ENCODE measurements at regions of chrX and their contacts with region 1.

Region 1: GRCh38 chrX:12946838-12947544 is 27.9 kb upstream of the TMSB4X start:
- H3K4me3 ChIP-seq: no peak overlapping the region
- H3K27ac ChIP-seq: peak overlapping the region; percentile 90
- H3K4me1 ChIP-seq: peaks cover 17% of the 10 kb centered on the region
- CTCF ChIP-seq: peak; percentile 55; the same call in 1 of the 2 replicates

Region 2: GRCh38 chrX:12452268-12452667 is 494.7 kb before region 1 on chrX:
- CTCF ChIA-PET with region 1: no interaction called
- POLR2A ChIA-PET with region 1: no interaction called
- H3K4me3 ChIP-seq: no peak overlapping the region
- H3K27ac ChIP-seq: no peak overlapping the region
- H3K4me1 ChIP-seq: no peaks in the 10 kb centered on the region
- CTCF ChIP-seq: no peak

Region 3: GRCh38 chrX:12868747-12869146 is 78.2 kb before region 1 on chrX:
- CTCF ChIA-PET with region 1: no interaction called
- POLR2A ChIA-PET with region 1: no interaction called
- H3K4me3 ChIP-seq: no peak overlapping the region
- H3K27ac ChIP-seq: no peak overlapping the region
- H3K4me1 ChIP-seq: no peaks in the 10 kb centered on the region
- CTCF ChIP-seq: no peak

Region 4: DNA sequence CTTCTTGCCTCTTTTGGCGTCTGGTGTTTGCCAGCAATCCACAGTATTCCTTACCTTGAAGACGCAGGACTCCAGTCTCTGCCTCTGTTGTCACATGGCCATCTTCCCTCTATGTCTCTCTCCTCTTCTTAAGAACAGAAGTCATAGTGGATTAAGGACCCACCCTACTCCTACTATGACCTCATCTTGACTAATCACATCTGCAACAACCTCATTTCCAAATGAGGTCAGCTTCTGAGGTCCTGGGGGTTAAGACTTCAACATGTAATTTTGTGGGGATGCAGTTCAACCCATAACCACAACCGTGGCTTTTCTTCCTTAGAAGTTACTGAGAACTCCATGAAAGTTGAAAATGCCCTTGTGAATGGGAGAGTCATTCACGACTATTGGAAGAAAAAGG is 17.3 kb before region 1 on chrX:
- CTCF ChIA-PET with region 1: interaction called, 15 read pairs
- POLR2A ChIA-PET with region 1: no interaction called
- H3K4me3 ChIP-seq: no peak overlapping the region
- H3K27ac ChIP-seq: no peak overlapping the region
- H3K4me1 ChIP-seq: no peaks in the 10 kb centered on the region
- CTCF ChIP-seq: no peak

Region 5: GRCh38 chrX:12974796-12975669 is 28.0 kb after region 1 on chrX and contains the start of gene TMSB4X:
- CTCF ChIA-PET with region 1: interaction called, 14 read pairs
- POLR2A ChIA-PET with region 1: interaction called, 8 read pairs
- H3K4me3 ChIP-seq: peak within 1 kb of the TSS; percentile 62
- H3K27ac ChIP-seq: peak within 1 kb of the TSS; percentile 73
- H3K4me1 ChIP-seq: no peaks in the 10 kb centered on the region
- CTCF ChIP-seq: no peak

Region 6: GRCh38 chrX:13007519-13008188 is 60.7 kb after region 1 on chrX:
- CTCF ChIA-PET with region 1: interaction called, 14 read pairs
- POLR2A ChIA-PET with region 1: no interaction called
- H3K4me3 ChIP-seq: no peak overlapping the region
- H3K27ac ChIP-seq: no peak overlapping the region
- H3K4me1 ChIP-seq: no peaks in the 10 kb centered on the region
- CTCF ChIP-seq: no peak

Region 7: GRCh38 chrX:13043144-13043543 is 96.2 kb after region 1 on chrX:
- CTCF ChIA-PET with region 1: interaction called, 16 read pairs
- POLR2A ChIA-PET with region 1: no interaction called
- H3K4me3 ChIP-seq: no peak overlapping the region
- H3K27ac ChIP-seq: no peak overlapping the region
- H3K4me1 ChIP-seq: no peaks in the 10 kb centered on the region
- CTCF ChIP-seq: no peak

Region 8: DNA sequence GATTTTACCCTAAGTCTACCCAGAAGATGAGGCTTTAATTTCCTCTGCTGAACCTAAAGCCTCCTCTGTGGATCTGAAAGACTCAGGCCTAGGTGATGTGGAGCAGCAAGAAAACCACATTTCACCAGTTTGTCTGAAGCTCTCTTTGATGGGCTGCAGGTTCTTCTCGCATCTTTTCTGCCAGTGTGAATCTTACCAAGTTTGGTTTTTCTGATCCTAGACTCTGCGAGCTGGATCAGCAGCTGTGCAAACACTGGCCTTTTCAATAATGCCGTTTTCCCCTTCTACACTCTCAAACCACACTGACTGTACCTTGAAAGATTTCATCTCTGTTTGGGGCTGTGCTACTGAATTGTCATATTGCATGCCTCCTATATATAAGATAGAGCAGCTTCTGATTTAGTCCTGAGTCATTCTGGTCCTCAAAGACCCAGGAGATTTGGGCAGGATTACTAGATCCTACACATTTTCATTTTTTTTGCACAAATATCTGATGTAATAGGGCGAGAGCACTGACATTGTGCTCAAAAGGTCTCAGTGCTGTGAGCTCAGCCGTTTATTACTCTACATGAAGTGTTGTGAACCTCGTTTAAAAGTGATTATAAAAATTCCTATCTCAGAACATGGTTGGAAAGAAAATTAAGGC is 231.1 kb after region 1 on chrX:
- CTCF ChIA-PET with region 1: interaction called, 10 read pairs
- POLR2A ChIA-PET with region 1: no interaction called
- H3K4me3 ChIP-seq: no peak overlapping the region
- H3K27ac ChIP-seq: no peak overlapping the region
- H3K4me1 ChIP-seq: no peaks in the 10 kb centered on the region; the same call in 1 of the 2 replicates
- CTCF ChIP-seq: no peak

Region 9: GRCh38 chrX:13487731-13488523 is 540.9 kb after region 1 on chrX:
- CTCF ChIA-PET with region 1: interaction called, 84 read pairs
- POLR2A ChIA-PET with region 1: interaction called, 12 read pairs
- H3K4me3 ChIP-seq: no peak overlapping the region
- H3K27ac ChIP-seq: peak overlapping the region; percentile 92
- H3K4me1 ChIP-seq: peaks cover 12% of the 10 kb centered on the region
- CTCF ChIP-seq: peak; percentile 57

Measured in HEK293 (cell line).